Right ventricle myocardium superior (tissue), 1 donor: ENCODE measurements at regions of chr10 and their contacts with region 1.

Region 1: DNA sequence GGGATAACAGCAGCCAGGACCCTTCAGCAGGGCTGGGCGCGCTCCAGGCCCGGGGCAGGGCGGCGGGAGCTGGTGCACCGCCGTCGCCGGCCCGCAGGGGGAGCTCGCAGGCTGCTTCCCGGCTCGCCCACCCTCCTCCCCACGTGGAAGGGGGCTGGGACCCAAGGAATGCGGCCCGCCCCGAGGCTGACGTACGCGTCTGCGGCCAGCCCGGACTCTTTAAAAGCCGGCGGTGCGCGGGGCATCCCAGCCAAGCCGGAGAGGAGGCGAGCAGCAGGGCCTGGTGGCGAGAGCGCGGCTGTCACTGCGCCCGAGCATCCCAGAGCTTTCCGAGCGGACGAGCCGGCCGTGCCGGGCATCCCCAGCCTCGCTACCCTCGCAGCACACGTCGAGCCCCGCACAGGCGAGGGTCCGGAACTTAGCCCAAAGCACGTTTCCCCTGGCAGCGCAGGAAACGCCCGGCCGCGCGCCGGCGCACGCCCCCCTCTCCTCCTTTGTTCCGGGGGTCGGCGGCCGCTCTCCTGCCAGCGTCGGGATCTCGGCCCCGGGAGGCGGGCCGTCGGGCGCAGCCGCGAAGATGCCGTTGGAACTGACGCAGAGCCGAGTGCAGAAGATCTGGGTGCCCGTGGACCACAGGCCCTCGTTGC is at the start of gene PFKFB3:
- DNase-seq: peak; percentile 98
- ATAC-seq: peak; percentile 92
- total RNA-seq, gene PFKFB3: 24.7 TPM

Region 2: DNA sequence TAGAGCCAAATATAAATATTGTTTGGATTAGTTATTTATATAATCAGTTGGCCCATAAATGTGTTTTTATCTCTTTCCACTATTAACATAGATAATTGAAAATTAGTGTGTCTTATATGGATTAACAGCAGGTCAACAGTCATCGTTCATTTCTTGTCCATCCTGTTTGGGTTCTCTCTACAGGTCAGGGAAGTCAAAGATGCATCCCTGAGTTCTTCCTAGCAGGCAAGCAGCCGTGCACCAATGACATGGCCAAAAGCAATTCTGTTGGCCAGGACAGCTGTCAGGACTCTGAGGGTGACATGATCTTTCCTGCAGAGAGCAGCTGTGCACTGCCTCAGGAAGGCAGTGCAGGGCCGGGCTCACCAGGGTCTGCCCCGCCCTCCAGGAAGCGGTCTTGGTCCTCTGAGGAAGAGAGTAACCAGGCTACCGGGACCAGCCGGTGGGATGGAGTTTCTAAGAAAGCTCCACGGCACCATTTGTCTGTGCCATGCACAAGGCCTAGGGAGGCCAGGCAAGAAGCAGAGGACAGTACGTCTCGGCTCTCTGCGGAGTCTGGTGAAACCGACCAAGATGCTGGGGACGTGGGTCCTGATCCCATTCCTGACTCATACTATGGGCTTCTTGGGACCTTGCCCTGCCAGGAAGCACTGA is 296.8 kb before region 1 on chr10:
- intact Hi-C with region 1: no loop called
- DNase-seq: peak; percentile 63
- ATAC-seq: peak; percentile 73

Region 3: GRCh38 chr10:6114805-6115341 is 87.9 kb before region 1 on chr10:
- intact Hi-C with region 1: loop called (anchors 5 kb)
- DNase-seq: no peak
- ATAC-seq: peak; percentile 25

Region 4: GRCh38 chr10:6163364-6164270 is 39.2 kb before region 1 on chr10:
- intact Hi-C with region 1: loop called (anchors 2 kb)
- DNase-seq: peak; percentile 94
- ATAC-seq: peak; percentile 98